ENCODE measurements at regions of chr2 and their contacts with region 1.

Region 1: DNA sequence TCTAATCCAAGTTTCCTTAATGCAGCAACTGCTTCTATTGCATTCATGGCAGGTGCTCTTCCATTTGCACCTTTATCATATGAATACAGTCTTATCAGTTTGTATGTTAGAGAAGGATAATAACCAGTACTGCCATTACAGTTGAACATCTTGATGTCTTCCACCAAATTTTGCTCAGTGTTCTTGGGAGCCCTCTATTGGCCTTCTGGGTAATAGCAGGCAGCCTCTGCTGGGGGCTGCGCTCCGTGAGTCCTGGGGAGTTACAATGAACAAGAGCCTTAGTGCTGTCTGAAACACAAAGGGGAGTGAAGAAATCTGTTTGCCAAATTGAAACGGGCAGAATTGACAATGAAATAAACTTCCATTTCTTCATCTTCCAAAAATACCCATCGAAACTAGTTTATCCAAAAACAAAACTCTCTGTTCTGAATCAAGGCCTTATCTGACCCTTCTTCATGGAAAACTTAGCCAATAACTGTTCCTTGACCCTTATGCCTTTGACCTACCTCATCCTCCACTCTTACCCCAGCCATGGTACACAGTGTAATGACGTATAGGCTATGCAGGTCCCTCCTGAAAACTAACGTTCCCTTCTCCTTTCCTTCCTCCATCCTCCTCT is 79.9 kb downstream of the ALK start:
- DNase-seq: peak; percentile 46
- H3K4me3 Mint-ChIP-seq: no peak overlapping the region
- H3K27ac Mint-ChIP-seq: no peak overlapping the region
- H3K4me1 Mint-ChIP-seq: no peaks in the 10 kb centered on the region
- H3K27me3 Mint-ChIP-seq: peaks cover 44% of the 10 kb centered on the region
- CTCF ChIP-seq: peak; percentile 85

Region 2: GRCh38 chr2:29238497-29238896 is 603.0 kb before region 1 on chr2:
- CTCF ChIA-PET with region 1: interaction called, 11 read pairs
- POLR2A ChIA-PET with region 1: no interaction called
- intact Hi-C with region 1: loop called (anchors 2 kb)
- DNase-seq: peak; percentile 64
- H3K4me3 Mint-ChIP-seq: no peak overlapping the region
- H3K27ac Mint-ChIP-seq: no peak overlapping the region
- H3K4me1 Mint-ChIP-seq: no peaks in the 10 kb centered on the region
- H3K27me3 Mint-ChIP-seq: peaks cover 74% of the 10 kb centered on the region
- CTCF ChIP-seq: peak; percentile 76

Region 3: DNA sequence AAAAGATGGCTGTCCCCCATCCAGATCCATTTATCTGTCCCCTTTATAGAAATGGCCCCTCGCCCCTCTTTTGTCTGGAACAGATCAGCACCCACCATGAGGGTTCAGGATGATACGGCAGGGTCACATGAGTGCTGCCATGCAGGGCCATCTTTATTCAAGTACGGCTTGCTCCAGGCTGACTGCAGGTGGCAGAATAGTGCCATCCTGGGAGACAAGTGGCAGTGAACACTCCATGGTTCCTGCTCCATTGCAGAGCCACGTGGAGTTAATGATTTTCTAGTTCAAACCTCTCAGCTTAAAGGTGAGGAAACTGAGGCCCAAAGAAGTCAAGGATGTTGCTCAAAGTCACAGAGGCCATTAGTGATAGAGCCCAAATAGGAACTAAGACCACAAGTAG is 545.6 kb before region 1 on chr2:
- CTCF ChIA-PET with region 1: interaction called, 6 read pairs
- POLR2A ChIA-PET with region 1: no interaction called
- intact Hi-C with region 1: loop called (anchors 1 kb)
- DNase-seq: peak; percentile 44
- H3K4me3 Mint-ChIP-seq: no peak overlapping the region
- H3K27ac Mint-ChIP-seq: no peak overlapping the region
- H3K4me1 Mint-ChIP-seq: no peaks in the 10 kb centered on the region
- H3K27me3 Mint-ChIP-seq: peaks cover 81% of the 10 kb centered on the region
- CTCF ChIP-seq: peak; percentile 33

Region 4: DNA sequence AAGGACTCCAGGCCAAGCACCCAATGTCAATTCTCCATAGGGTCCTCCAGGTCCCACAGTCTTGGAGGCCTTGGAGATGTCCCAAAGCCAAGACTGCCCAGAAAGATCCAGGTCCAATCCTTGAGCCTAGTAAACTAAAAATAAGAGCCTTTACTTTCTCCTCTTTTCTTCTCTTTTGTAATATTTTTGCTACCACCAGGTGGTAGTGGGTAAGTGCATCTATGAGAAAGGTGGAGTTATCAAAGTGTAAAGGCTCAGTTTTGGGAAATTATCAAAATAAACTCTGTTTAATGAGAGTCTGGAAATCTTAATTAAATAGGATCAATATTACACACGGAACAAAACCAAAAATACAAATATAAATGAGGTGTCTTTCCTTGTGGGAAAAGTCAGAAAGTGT is 196.5 kb before region 1 on chr2:
- CTCF ChIA-PET with region 1: interaction called, 3 read pairs
- POLR2A ChIA-PET with region 1: no interaction called
- intact Hi-C with region 1: loop called (anchors 10 kb)
- DNase-seq: no peak
- H3K4me3 Mint-ChIP-seq: no peak overlapping the region
- H3K27ac Mint-ChIP-seq: no peak overlapping the region
- H3K4me1 Mint-ChIP-seq: no peaks in the 10 kb centered on the region
- H3K27me3 Mint-ChIP-seq: peaks cover 29% of the 10 kb centered on the region
- CTCF ChIP-seq: no peak

Measured in MCF 10A (cell line).